Activated T-helper 2 cell treated with anti-CD3 and anti-CD28 coated beads, Interferon-gamma antibody, Interleukin-2, Interleukin-4, amounts not matched to agents 10 μg/mL and 5 μg/mL and 100 μg/mL, durations not matched to agents 14 hours and 24 hours and 36 hours (primary cell): ENCODE measurements at regions of chr15 and their contacts with region 1.

Region 1: DNA sequence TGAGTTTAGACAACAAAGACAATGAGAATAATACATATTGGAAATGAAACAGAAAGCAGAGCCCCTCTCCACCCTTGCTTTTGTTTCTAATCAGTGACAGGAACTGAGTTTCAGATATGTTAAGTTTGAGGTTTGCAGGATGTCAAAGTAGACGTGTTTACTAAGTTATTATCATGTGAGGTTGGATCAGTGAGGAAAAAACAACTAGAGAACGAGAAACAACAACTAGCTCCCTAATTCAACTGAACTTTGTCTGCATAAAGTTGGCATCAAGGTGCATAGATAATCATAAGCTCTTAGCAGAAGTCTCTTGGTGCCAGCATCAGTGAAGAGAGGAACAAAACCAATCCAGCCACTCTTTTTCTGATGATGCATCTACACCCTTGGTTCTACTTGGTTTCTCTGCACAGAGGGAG is 491.1 kb upstream of the NR2F2 start:
- DNase-seq: no peak
- H3K4me3 Mint-ChIP-seq: peak overlapping the region; percentile 9
- H3K27ac Mint-ChIP-seq: peak overlapping the region; percentile 48
- H3K4me1 Mint-ChIP-seq: peaks cover 40% of the 10 kb centered on the region
- H3K27me3 Mint-ChIP-seq: peaks cover 8% of the 10 kb centered on the region

Region 2: DNA sequence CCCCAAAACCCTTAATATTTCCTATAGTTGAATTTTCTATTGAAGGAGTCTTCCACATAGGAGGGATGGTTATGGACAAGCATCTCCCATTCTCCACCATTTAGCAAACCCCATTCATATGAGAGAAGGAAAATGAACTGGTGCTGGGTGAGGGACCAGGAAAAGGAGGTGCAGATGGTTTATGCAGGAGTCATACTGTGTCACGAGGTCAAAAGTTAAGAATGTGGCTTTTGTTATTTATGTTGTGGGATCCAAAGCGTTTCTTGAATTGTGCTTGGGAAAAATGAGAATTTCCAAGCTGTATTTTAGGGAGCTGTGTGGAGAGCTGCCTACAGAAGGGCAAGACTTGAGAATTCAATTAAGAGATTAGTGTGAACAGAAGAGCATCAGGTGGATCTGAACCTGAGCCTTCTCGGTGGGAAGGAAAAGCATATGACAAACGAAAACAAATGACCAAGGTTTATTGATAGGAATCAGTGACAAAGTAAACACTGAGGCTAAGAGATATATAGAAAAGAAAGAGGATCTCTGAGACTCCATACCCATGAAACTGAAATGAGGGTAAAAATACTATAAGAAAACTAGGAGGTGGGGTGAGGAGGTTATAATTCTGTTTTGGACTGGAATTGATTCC is 17.9 kb after region 1 on chr15:
- intact Hi-C with region 1: no loop called
- DNase-seq: no peak
- H3K4me3 Mint-ChIP-seq: no peak overlapping the region
- H3K27ac Mint-ChIP-seq: no peak overlapping the region
- H3K4me1 Mint-ChIP-seq: no peaks in the 10 kb centered on the region
- H3K27me3 Mint-ChIP-seq: peaks cover 44% of the 10 kb centered on the region

Region 3: DNA sequence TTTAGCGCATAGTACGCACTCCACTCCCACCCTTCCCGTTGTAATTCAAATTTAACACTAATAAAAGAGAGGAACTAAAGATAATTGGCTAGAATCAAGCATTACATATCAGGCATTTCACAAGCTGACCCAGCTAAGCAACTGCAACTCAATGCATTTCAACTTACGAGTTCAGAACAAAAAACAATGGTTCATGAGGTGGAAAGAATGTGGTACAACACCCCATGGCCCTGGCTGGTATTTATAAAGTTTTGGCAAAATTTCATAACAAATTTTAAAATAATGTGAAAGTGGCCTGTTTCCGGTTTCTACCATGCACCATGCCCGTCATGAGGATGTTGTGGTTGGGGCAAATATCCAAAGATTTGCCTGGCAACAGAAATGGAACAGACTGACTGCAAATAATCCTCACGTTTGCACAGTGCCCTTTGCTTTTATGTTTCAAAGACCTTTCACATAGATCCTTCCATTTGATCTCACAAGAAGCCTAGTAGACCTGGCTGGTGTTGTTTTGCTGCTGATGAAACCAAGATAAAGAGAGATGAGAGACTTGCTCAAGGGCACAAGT is 35.8 kb after region 1 on chr15:
- intact Hi-C with region 1: loop called (anchors 5 kb)
- DNase-seq: no peak
- H3K4me3 Mint-ChIP-seq: no peak overlapping the region
- H3K27ac Mint-ChIP-seq: no peak overlapping the region
- H3K4me1 Mint-ChIP-seq: peaks cover 44% of the 10 kb centered on the region
- H3K27me3 Mint-ChIP-seq: peaks cover 4% of the 10 kb centered on the region